ENCODE measurements at regions of chr5 and their contacts with region 1.

Region 1: DNA sequence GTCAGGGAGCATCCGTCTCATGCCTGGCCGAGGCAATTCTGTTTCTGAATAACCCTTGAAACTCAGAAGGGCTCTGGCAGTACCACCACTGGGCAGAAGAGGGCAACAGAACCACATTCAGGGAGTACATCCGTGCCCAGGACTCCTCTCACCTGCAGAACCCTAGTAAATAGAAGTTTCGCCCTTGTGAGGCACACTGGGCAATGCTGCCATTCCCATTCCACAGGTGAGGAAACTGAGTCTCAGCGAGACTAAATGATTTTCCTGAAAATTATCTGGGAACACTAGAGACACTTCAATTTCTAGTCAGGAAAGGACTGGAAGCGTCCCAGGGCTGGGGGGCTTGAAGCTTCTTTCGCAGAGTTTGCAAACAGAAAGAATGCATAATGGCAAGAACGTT is 74.7 kb downstream of the FGF1 start:
- DNase-seq: peak; percentile 73 to 89 (median 83)
- ATAC-seq: peak; percentile 80 to 86
- H3K4me3 ChIP-seq: no peak overlapping the region
- H3K27ac ChIP-seq: no peak overlapping the region
- H3K4me1 ChIP-seq: no peaks in the 10 kb centered on the region
- H3K27me3 ChIP-seq: no peaks in the 10 kb centered on the region

Region 2: GRCh38 chr5:142024771-142025304 is 586.3 kb before region 1 on chr5:
- intact Hi-C with region 1: no loop called
- DNase-seq: peak; percentile 91 to 96 (median 95)
- ATAC-seq: peak; percentile 99
- H3K4me3 ChIP-seq: peak overlapping the region; percentile 61
- H3K27ac ChIP-seq: peak overlapping the region; percentile 95
- H3K4me1 ChIP-seq: no peaks in the 10 kb centered on the region
- H3K27me3 ChIP-seq: no peaks in the 10 kb centered on the region

Region 3: GRCh38 chr5:142655339-142656267 is 44.4 kb after region 1 on chr5:
- intact Hi-C with region 1: loop called in 2 of 4 experiments (anchors 5 kb)
- DNase-seq: peak; percentile 85 to 97 (median 95)
- ATAC-seq: peak; percentile 93 to 95
- H3K4me3 ChIP-seq: no peak overlapping the region
- H3K27ac ChIP-seq: peak overlapping the region; percentile 78
- H3K4me1 ChIP-seq: peaks cover 8% of the 10 kb centered on the region
- H3K27me3 ChIP-seq: no peaks in the 10 kb centered on the region

Region 4: GRCh38 chr5:142888469-142889085 is 277.4 kb after region 1 on chr5:
- intact Hi-C with region 1: loop called in 1 of 4 experiments (anchors 10 kb)
- DNase-seq: no peak
- ATAC-seq: peak; percentile 48 to 72
- H3K4me3 ChIP-seq: no peak overlapping the region
- H3K27ac ChIP-seq: no peak overlapping the region
- H3K4me1 ChIP-seq: peaks cover 5% of the 10 kb centered on the region
- H3K27me3 ChIP-seq: no peaks in the 10 kb centered on the region

Measured in right cardiac atrium (tissue), 5 donors.